ENCODE measurements at regions of chr17 and their contacts with region 1.

Region 1: GRCh38 chr17:43170766-43171585 is at the start of gene NBR1:
- DNase-seq: peak; percentile 100
- ATAC-seq: peak; percentile 88
- H3K4me3 ChIP-seq: peak within 1 kb of the TSS; percentile 78
- H3K27ac ChIP-seq: peak within 1 kb of the TSS; percentile 96
- H3K4me1 ChIP-seq: no peaks in the 10 kb centered on the region
- H3K27me3 ChIP-seq: no peaks in the 10 kb centered on the region
- CTCF ChIP-seq: peak in 2 of 3 experiments; percentile 21 to 27; a peak in 2 of 6 replicates
- EP300 ChIP-seq: no peak
- POLR2A ChIP-seq: peak; percentile 90
- RAD21 ChIP-seq: peak; percentile 6; the same call in 1 of the 2 replicates
- polyA plus RNA-seq, gene NBR1: 3.5 to 6.2 TPM

Region 2: DNA sequence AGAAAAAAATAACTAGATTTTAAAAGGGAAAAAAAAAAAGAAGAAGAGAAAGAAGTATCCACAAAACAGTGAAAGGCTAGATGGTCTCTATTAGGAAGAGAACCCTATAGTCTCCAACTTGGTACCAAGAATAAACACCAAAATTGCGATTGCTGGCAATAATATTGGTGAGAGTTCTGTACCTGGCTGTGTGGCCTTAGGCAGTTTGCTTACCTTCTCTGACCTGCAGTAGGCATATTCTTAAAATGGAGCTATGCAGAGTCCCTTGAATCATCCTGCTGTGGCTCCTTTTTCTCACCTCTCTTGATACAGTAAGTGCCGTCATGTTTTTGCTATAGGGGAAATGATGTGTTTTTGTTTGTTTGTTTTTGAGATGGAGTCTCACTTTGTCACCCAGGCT is 81.0 kb before region 1 on chr17:
- CTCF ChIA-PET with region 1: no interaction called
- POLR2A ChIA-PET with region 1: no interaction called
- RAD21 ChIA-PET with region 1: no interaction called
- SMC1A ChIA-PET with region 1: no interaction called
- in situ Hi-C with region 1: no loop called
- intact Hi-C with region 1: no loop called
- DNase-seq: no peak
- ATAC-seq: no peak
- H3K4me3 ChIP-seq: no peak overlapping the region
- H3K27ac ChIP-seq: no peak overlapping the region
- H3K4me1 ChIP-seq: no peaks in the 10 kb centered on the region
- H3K27me3 ChIP-seq: no peaks in the 10 kb centered on the region
- CTCF ChIP-seq: no peak
- EP300 ChIP-seq: no peak
- POLR2A ChIP-seq: no peak
- RAD21 ChIP-seq: no peak

Region 3: GRCh38 chr17:43125133-43125966 is 45.6 kb before region 1 on chr17 and contains the start of gene BRCA1:
- CTCF ChIA-PET with region 1: interaction called, 3 read pairs
- POLR2A ChIA-PET with region 1: interaction called, 6 read pairs
- RAD21 ChIA-PET with region 1: interaction called, 3 read pairs
- SMC1A ChIA-PET with region 1: interaction called, 4 read pairs
- in situ Hi-C with region 1: no loop called
- intact Hi-C with region 1: loop called (anchors 1 kb)
- DNase-seq: peak; percentile 96
- ATAC-seq: peak; percentile 99
- H3K4me3 ChIP-seq: peak within 1 kb of the TSS; percentile 95
- H3K27ac ChIP-seq: peak within 1 kb of the TSS; percentile 88
- H3K4me1 ChIP-seq: peaks cover 5% of the 10 kb centered on the region
- H3K27me3 ChIP-seq: no peaks in the 10 kb centered on the region
- CTCF ChIP-seq: no peak
- EP300 ChIP-seq: no peak
- POLR2A ChIP-seq: peak; percentile 84
- RAD21 ChIP-seq: no peak
- polyA plus RNA-seq, gene BRCA1: 16.8 to 17.4 TPM